Colonic mucosa (tissue), 4 donors: ENCODE measurements at regions of chr12 and their contacts with region 1.

Region 1: DNA sequence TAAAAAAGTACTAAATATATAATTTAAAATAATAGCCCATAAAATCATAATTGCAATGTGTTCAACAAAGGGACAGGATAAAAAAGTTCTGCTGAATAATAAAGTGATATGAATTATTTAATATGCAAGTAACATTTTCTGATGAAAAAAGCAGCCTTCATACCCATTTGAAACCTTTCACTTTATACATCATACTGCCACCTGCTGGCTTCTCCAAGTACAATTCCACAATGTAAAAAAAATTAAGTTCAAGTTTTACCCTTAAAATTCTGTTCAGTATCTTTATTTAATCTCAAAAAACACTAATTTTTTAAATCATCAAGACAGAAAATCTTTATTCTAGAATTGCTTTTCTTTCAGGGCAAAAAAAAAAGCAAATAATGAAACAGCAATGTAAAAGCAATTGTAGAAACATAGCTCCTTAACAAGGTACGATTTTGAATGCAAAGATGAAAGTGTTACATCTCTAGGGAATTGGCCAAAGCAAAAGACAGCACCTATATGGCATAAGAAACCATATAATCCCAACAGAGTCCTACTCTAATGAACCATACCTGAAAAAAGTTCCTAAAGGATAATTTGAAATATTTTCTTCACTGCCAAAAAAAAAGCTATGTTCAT is 15.0 kb downstream of the MDM1 start:
- DNase-seq: peak; percentile 37
- H3K4me3 ChIP-seq: no peak overlapping the region
- H3K27ac ChIP-seq: no peak overlapping the region
- H3K4me1 ChIP-seq: no peaks in the 10 kb centered on the region
- H3K27me3 ChIP-seq: no peaks in the 10 kb centered on the region
- CTCF ChIP-seq: peak; percentile 71

Region 2: DNA sequence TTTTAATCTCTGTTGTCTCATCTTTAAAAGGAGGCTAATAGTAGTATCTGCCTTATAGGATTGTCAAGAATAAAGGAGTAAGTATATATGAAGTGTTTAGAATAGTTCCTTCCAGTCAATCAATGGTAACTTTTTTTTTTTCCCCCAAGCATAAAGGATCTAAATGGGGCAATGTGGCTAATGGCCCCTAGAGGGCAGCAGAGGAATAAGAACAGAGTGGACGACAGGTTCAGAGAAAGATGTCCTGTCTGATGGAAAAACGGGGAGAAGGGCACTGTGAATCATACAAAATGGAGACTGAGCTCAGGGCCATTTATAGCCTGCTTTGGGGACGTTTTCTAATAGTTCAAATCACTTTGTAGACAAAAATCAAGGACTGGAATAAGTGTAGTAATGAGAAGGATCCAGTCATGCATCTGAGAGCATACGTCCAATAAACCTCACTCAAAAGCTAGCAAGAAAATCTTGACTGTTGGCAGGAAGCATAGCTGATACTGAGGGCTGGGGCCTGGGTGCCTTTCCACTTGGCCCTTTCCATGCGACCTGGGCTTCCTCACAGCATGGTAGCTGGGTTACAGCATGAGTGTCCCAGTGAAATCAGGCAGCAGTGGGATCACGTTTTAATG is 276.6 kb before region 1 on chr12:
- intact Hi-C with region 1: loop called (anchors 5 kb)
- DNase-seq: peak; percentile 62
- H3K4me3 ChIP-seq: no peak overlapping the region
- H3K27ac ChIP-seq: no peak overlapping the region
- H3K4me1 ChIP-seq: no peaks in the 10 kb centered on the region
- H3K27me3 ChIP-seq: no peaks in the 10 kb centered on the region
- CTCF ChIP-seq: peak; percentile 87

Region 3: DNA sequence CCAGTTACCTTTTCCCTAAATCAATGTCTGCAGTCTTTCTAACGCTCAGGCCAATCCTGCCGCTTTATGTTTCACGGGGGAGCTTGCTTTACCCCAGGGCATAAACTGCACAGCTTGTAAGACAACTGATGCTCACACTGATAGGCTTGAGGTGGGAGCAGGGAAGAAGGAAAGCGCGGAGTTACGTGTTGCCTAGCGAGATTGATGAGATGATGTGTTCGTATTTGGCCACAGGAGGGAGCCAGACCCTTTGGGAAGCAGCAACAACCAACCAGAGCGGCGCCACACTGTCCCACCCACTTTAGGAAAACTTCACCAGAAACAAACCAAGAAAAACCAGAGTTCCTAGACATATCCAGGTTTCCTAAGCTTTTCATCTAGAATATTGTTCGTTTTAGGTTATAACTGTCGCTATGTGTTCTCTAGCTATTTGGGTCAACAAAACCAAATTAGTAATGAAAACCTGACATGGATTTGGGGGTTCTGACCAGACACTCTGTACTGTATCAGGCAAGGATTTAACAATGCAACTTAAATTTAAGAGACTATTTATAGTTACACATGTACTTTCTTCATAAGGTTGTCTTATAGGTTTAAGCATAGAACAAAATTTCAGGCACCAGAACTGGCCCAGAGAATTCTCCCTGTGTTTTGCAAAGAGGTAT is 93.9 kb before region 1 on chr12:
- intact Hi-C with region 1: loop called (anchors 2 kb)
- DNase-seq: peak; percentile 81
- H3K4me3 ChIP-seq: no peak overlapping the region
- H3K27ac ChIP-seq: no peak overlapping the region
- H3K4me1 ChIP-seq: no peaks in the 10 kb centered on the region
- H3K27me3 ChIP-seq: no peaks in the 10 kb centered on the region
- CTCF ChIP-seq: peak; percentile 72